B cell (primary cell): ENCODE measurements at regions of chr11 and their contacts with region 1.

Region 1: DNA sequence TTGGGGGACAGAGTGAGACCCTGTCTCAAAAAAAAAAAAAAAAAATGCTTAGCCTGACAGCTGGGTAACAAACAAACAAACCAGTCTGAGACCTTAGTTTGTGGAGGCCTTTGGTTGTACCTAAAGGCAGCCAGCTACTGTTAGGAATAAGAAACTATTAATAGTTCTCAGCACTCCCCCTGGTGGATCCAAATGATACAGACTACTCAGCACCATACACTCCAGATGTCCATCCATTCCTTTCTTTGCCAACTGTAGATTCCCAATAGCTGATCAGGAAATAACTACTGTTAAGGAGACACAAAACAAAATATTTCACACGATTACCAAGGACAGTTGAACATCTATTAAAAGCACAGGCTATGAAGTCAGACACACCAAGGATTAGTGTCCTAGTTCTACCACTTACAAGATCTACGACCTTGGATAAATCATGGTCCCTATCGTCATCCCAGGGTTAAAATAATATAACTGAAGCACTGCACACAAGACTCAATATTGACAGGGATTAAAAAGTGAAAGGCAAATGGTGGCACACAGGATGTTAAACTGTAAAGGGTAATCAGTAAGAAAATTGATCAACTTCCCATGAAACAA is 17.2 kb downstream of the CLDN25 start:
- DNase-seq: peak; percentile 47
- ATAC-seq: peak; percentile 75
- H3K4me3 ChIP-seq: no peak overlapping the region
- H3K4me3 Mint-ChIP-seq: no peak overlapping the region
- H3K27ac ChIP-seq: no peak overlapping the region
- H3K27ac Mint-ChIP-seq: no peak overlapping the region
- H3K4me1 ChIP-seq: no peaks in the 10 kb centered on the region
- H3K4me1 Mint-ChIP-seq: no peaks in the 10 kb centered on the region
- H3K27me3 ChIP-seq: no peaks in the 10 kb centered on the region
- H3K27me3 Mint-ChIP-seq: no peaks in the 10 kb centered on the region
- CTCF ChIP-seq: peak; percentile 72

Region 2: DNA sequence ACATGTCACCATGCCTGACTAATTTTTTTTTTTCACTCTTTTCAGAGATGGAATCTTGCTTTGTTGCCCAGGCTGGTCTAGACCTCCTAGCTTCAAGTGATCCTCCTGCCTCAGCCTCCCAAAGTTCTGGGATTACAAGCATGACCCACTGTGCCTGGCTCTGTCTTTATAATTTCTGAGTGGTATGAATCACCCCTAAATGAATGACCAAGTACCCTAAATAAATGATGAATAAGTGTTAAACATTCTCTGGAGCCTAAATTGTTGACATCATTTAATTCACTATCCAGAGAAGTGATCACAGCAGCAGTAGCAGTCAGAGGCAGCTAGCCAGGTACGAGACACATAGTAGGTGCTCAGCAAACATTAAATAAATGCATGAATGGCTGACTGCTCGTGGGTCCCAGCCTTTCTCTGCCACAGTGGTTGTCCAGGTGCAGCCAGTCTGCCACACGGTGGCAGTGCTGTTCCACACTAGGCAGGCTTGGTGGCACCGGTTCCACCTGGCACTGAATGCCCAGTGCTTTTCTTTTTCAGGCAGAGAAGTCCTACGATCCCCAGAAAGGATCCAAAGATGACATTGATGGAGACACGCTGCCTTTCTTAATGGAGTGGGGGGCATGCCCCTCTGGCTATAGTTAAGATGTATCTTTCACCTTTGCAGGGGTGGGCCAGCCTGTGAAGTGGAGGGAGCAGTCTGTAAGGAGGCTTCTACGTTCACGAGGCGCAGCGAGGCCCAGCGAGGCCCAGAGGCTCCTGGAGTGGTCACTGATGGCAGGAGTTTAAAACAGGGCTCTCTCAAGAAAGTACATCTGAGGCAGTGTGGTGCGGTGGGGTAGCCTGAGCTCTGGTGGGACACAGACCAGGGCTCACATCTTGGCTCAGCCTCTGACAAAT is 491.1 kb before region 1 on chr11:
- CTCF ChIA-PET with region 1: interaction called, 6 read pairs
- POLR2A ChIA-PET with region 1: no interaction called
- intact Hi-C with region 1: loop called (anchors 1 kb)
- DNase-seq: peak; percentile 78
- ATAC-seq: peak; percentile 82
- H3K4me3 ChIP-seq: no peak overlapping the region
- H3K4me3 Mint-ChIP-seq: no peak overlapping the region
- H3K27ac ChIP-seq: no peak overlapping the region
- H3K27ac Mint-ChIP-seq: no peak overlapping the region
- H3K4me1 ChIP-seq: peaks cover 0 to 5% of the 10 kb centered on the region in 2 donors
- H3K4me1 Mint-ChIP-seq: no peaks in the 10 kb centered on the region
- H3K27me3 ChIP-seq: peaks cover 0 to 3% (median 0%) of the 10 kb centered on the region in 4 experiments
- H3K27me3 Mint-ChIP-seq: peaks cover 7% of the 10 kb centered on the region
- CTCF ChIP-seq: peak; percentile 98